Activated naive CD4-positive, alpha-beta T cell treated with anti-CD3 and anti-CD28 coated beads for 36 hours (primary cell): ENCODE measurements at regions of chr3 and their contacts with region 1.

Region 1: GRCh38 chr3:108489771-108490170 is 20.6 kb downstream of the MYH15 start:
- DNase-seq: peak; percentile 53
- H3K4me3 Mint-ChIP-seq: no peak overlapping the region
- H3K27ac Mint-ChIP-seq: no peak overlapping the region
- H3K4me1 Mint-ChIP-seq: peaks cover 2% of the 10 kb centered on the region
- H3K27me3 Mint-ChIP-seq: no peaks in the 10 kb centered on the region

Region 2: GRCh38 chr3:108552267-108553159 is 62.7 kb after region 1 on chr3:
- CTCF ChIA-PET with region 1: interaction called, 11 read pairs
- intact Hi-C with region 1: loop called (anchors 1 kb)
- DNase-seq: no peak
- H3K4me3 Mint-ChIP-seq: no peak overlapping the region
- H3K27ac Mint-ChIP-seq: no peak overlapping the region
- H3K4me1 Mint-ChIP-seq: peaks cover 2% of the 10 kb centered on the region
- H3K27me3 Mint-ChIP-seq: no peaks in the 10 kb centered on the region

Region 3: GRCh38 chr3:108662130-108662738 is 172.5 kb after region 1 on chr3:
- CTCF ChIA-PET with region 1: interaction called, 3 read pairs
- intact Hi-C with region 1: loop called (anchors 1 kb)
- DNase-seq: peak; percentile 63
- H3K4me3 Mint-ChIP-seq: no peak overlapping the region
- H3K27ac Mint-ChIP-seq: no peak overlapping the region
- H3K4me1 Mint-ChIP-seq: peaks cover 12% of the 10 kb centered on the region
- H3K27me3 Mint-ChIP-seq: no peaks in the 10 kb centered on the region

Region 4: GRCh38 chr3:109081746-109082510 is 592.2 kb after region 1 on chr3:
- CTCF ChIA-PET with region 1: interaction called, 4 read pairs
- intact Hi-C with region 1: loop called (anchors 1 kb)
- DNase-seq: peak; percentile 38
- H3K4me3 Mint-ChIP-seq: no peak overlapping the region
- H3K27ac Mint-ChIP-seq: no peak overlapping the region
- H3K4me1 Mint-ChIP-seq: no peaks in the 10 kb centered on the region
- H3K27me3 Mint-ChIP-seq: peaks cover 6% of the 10 kb centered on the region